HAP-1 (cell line): ENCODE measurements at regions of chr3 and their contacts with region 1.

Region 1: DNA sequence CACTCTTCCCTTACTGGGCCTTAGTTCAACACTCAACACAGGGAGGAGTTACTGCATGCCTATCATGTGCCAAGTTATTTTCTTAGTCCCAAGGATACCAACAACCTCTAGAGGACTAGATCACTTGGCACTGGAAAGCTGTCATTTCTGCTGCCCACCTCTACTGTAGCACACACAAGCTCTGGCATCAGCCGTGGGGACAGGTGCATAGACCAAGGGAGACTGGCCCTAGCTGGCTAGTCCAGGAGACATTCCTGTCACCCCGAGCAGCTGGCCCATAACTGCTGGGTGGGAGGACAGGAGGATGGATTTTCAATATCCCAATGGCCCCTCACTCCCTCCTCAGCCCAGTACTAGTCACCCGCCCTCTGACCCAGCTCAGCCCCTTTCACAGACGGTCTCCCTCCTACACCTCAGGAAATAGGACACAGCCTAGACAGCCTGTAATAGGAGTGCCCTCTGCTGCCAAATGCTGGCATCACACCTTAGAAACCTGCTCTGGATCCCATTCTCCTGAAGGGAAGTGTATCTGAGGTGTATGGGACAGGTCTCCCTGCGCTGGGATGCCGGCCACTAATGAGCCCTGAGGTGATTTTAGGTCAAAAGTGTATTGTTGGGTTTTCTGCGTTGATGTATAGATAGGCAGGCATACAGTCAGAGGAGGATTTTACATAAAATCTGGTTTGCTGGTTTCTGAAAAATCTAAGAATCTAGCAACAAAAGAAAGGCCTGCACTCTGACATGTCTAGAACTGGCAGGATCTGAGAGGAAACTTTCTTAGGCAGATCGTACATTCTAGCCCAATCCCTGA is 3.4 kb upstream of the DZIP1L start:
- DNase-seq: peak; percentile 69 to 87
- H3K4me3 ChIP-seq: no peak overlapping the region
- H3K4me1 ChIP-seq: peaks cover 1% of the 10 kb centered on the region
- H3K27me3 ChIP-seq: no peaks in the 10 kb centered on the region

Region 2: DNA sequence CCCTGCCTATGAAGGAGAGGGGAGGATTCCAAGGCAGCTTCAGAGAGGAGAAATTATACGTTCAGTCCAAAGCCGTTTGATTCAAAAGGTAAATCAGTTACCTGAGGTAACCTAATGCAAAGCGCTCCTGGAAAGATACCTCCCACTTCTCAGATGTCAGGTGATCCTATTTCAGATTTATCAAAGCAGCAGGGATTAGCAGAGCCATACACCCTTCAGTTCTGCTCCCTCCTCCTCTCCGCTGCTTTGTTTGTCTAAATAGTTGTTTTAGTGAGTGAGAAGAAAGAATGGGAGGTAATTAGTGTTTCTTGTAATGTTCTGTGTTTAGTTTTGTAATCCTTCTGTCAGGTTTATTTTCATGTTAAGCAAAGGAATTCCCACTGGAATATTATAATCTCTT is 273.6 kb before region 1 on chr3:
- in situ Hi-C with region 1: no loop called
- DNase-seq: peak in 1 of 2 experiments; percentile 38
- H3K4me3 ChIP-seq: no peak overlapping the region
- H3K4me1 ChIP-seq: peaks cover 9% of the 10 kb centered on the region
- H3K27me3 ChIP-seq: peaks cover 15% of the 10 kb centered on the region

Region 3: DNA sequence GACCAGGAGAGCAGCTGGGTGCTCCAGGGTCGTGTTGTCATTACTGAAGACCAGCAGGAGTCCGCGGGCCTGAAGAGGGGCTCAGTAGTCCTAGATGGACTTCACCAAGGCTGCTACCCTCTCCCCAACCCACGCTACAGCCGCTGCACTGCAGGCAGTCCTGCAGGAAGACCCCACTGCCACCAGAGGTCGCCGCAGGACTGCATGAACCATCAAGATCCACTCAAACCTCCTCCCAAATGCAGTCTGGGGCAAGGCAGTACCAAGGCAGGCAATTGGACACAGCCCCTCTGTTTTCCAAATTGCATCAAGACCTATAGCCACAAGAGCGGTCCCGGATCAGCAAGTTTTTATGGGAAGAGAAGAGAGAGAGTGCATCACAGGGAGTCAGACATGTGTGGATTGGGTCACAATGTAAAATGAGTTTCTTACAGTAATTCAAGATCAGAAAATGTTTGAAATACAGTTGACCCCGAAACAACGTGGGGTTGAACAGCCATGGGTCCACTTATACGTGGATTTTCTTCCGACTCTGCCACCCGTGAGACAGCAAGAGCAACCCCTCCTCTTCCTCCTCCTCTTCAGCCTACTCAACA is 50.1 kb before region 1 on chr3:
- in situ Hi-C with region 1: loop called (anchors 5 kb)
- DNase-seq: peak; percentile 53 to 85
- H3K4me3 ChIP-seq: no peak overlapping the region
- H3K4me1 ChIP-seq: peaks cover 11% of the 10 kb centered on the region
- H3K27me3 ChIP-seq: no peaks in the 10 kb centered on the region

Region 4: DNA sequence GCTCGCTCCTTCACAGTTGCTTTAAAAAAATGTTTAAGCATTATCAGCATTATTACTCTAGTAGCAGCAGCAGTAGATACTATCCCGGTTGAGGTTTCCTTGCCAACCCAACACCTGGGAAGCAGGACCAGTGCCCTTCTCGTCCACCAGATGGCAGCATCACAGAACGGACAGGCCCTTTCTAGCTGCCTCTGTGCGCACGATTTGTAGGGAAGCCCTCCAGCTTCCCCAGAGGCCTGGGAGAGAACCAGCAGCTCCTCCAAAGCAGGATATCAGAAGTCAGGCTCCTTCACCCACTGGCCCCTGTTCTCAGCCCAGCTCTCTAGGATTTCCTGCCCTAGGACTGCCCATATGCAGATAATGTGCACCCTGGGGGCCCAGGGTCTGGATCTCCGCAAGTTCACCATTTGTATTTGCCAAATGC is 298.8 kb after region 1 on chr3:
- in situ Hi-C with region 1: no loop called
- DNase-seq: peak; percentile 86 to 87
- H3K4me3 ChIP-seq: no peak overlapping the region
- H3K4me1 ChIP-seq: no peaks in the 10 kb centered on the region
- H3K27me3 ChIP-seq: no peaks in the 10 kb centered on the region